ENCODE measurements at regions of chr11 and their contacts with region 1.

Region 1: DNA sequence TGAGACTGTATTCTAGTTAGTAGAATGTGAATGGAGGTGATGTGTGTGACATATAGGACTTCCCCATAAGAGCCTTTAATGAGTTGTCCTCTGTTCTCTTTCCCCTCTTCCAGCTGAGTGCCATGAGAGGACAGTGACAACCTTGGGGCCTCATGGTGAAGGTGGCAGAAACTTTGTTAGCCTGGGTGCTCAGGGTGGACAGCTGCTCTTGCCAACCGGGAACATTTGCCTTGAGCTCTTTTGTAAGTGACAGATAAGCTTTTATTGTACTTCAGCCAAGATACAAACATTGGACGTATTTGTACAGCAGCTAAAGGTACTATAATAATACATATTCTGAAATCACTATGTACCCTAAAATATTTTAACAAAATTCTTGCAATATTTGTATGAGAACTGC is 33.0 kb upstream of the PLET1 start:
- DNase-seq: no peak
- ATAC-seq: no peak
- H3K4me3 Mint-ChIP-seq: no peak overlapping the region
- H3K27ac Mint-ChIP-seq: no peak overlapping the region
- H3K4me1 Mint-ChIP-seq: peaks cover 13 to 47% (median 35%) of the 10 kb centered on the region in 4 donors
- H3K27me3 Mint-ChIP-seq: no peaks in the 10 kb centered on the region

Region 2: DNA sequence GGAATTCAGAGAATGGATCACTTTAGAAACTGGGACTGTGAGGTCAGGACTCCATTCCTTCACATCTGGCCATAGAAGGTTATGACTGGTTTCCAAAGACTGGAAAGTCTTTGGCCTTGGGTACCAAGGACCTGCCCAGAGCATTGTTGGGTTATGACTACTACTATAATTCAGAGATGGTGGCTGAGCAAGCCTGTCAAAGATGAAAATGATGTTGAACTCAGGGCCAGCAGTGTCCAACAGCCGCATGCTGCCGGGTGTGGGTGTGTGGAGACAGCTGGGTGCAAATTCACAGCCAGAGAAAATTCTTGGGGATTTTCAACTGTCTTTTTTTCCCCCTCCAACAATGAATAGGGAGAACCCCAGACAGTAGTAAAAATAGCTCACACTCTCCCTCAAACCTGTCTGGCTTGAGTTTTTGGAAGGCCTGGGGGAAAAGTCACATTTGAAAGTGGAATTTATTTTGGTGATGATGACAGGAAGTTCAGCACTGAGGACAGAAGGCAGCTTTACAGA is 500.8 kb after region 1 on chr11:
- POLR2A ChIA-PET with region 1: interaction called, 10 read pairs
- DNase-seq: no peak
- ATAC-seq: no peak
- H3K4me3 Mint-ChIP-seq: no peak overlapping the region
- H3K27ac Mint-ChIP-seq: no peak overlapping the region
- H3K4me1 Mint-ChIP-seq: peaks cover 4 to 8% (median 6%) of the 10 kb centered on the region in 4 donors
- H3K27me3 Mint-ChIP-seq: peaks cover 0 to 12% (median 2%) of the 10 kb centered on the region in 5 donors